Aorta (tissue), 5 donors: ENCODE measurements at regions of chr2 and their contacts with region 1.

Region 1: DNA sequence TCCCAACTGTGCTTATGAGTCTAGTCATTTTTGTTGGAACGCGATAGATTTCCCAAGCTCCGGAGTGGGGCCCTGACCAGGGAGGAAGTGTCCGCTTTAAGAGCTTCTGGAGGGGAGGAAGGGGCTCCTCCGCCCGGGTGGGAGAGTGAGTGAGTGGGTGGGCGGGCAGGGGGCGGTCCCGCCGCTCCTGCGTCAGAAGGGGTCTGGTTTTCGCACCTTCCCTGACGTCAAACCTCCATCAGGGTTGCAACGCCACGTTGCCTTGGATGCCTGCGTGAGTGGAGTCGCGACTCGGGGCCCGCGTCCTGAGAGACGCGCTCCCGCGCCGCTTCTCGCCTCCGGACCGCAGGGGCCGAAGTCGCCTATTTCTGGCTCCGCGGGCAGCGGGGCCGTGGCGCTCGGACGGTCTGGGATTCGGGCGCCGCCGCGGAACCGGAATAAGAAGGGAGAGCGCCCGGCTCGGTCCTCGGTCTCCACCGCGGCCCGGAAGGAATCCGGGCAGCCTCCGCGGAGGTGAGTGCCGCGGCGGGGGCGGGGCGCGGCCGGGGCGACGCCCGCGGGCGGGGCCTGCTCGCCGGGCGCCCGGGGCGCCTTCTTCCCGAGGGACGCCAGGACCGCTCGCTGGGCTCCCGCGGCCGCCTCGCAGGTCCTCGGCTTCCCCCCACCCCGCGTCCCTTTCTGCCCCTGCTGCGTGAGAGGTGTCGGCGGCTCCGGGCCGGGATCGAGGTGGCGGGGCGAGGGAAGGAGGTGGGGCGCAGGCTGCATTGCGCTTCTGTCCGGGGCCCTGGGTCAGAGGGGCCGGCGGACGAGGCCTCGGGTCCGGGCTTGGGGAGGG is at the start of gene ZDBF2:
- DNase-seq: peak; percentile 51 to 80
- ATAC-seq: peak; percentile 87
- H3K4me3 ChIP-seq: peak within 1 kb of the TSS; percentile 60 to 78
- H3K27ac ChIP-seq: peak within 1 kb of the TSS in 1 of 2 donors; percentile 52
- H3K4me1 ChIP-seq: no peaks in the 10 kb centered on the region
- H3K27me3 ChIP-seq: no peaks in the 10 kb centered on the region
- total RNA-seq, gene ZDBF2: 15.1 to 20.2 TPM

Region 2: GRCh38 chr2:206442833-206443734 is 168.4 kb after region 1 on chr2 and contains the start of gene ADAM23:
- intact Hi-C with region 1: loop called in 1 of 2 experiments (anchors 10 kb)
- DNase-seq: peak; percentile 58 to 79
- ATAC-seq: peak; percentile 75
- H3K4me3 ChIP-seq: peak within 1 kb of the TSS; percentile 65
- H3K27ac ChIP-seq: no peak within 1 kb of the TSS
- H3K4me1 ChIP-seq: no peaks in the 10 kb centered on the region
- H3K27me3 ChIP-seq: no peaks in the 10 kb centered on the region
- total RNA-seq, gene ADAM23: 4.2 to 11.1 TPM